ENCODE measurements at regions of chr15 and their contacts with region 1.

Region 1: DNA sequence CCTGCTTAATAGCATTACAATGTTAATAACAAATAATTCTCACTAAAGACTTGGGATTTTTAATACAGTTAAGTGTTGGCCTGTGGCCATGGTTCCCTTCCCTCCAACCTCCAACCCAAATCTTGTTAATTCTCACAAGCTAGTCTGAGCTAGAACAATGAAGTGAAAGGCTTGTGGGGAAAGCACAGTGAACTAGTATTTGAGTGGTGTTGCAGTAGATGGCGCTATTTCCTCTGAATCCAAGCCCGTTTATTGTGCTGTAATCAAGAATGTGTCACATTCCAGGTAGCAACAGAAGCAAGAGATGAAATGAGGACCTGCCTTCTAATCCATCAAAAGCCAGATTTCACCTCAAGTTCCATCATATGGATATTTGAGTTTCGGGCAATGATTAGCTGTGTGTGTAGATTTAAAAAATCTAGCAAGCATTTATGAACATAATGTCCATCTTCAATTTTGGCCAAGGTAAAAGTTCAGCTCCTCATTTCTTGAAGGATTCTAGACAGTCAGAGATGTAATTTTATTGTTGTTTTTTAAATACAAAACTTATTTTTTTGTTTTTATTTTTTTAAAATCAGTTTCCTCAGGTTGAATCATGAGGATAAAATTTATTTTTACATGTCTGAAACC is 160.7 kb downstream of the SQOR start:
- DNase-seq: peak in 1 of 2 experiments; percentile 39
- H3K4me3 ChIP-seq: no peak overlapping the region
- H3K27ac ChIP-seq: no peak overlapping the region
- H3K4me1 ChIP-seq: no peaks in the 10 kb centered on the region
- H3K27me3 ChIP-seq: no peaks in the 10 kb centered on the region
- CTCF ChIP-seq: peak; percentile 72

Region 2: DNA sequence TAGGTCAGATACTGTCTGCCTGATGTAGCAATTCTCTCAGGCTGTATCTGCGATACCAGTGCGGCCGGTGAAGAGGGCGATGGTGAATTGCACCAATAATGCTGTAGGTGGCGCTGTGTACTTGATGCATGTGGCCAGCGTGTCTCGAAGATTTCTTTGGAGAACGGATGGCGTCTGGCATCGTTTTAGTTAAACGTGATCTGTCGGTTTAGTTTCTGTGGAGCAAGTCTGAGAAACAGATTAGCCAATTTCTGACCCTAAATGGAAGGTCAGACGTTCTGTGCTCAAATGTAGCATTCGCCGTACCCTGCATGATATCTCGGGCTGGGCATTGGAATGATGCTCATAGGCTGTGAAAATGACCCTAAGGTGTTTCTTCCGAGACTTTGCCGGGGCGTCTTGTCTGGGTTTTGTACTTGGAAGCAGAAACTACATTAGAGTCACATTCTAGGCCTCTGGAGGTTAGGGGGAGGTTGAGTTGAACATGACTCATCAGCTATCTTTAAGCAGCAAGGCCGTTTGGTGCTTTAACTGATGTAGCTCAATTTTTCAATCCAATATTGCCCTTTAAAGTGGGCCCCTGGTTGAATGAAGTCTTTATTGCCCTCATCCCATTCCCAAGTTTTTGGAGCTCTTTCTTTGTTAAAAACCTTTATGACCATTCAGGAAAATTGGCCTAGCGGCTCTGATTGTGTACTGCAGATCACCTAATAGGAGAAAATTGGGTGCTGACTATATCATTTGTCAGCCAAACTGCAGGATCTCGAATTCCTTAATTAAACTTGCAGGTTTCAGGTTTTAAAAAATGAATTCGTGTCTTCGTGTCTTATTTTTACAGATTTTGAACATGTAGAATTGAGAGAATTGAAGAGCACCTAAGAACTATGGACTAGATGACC is 80.7 kb before region 1 on chr15:
- CTCF ChIA-PET with region 1: no interaction called
- POLR2A ChIA-PET with region 1: no interaction called
- intact Hi-C with region 1: loop called (anchors 5 kb)
- DNase-seq: peak in 1 of 2 experiments; percentile 34
- H3K4me3 ChIP-seq: no peak overlapping the region
- H3K27ac ChIP-seq: no peak overlapping the region
- H3K4me1 ChIP-seq: no peaks in the 10 kb centered on the region
- H3K27me3 ChIP-seq: 0 out of 2 replicates have a peak, but pooled peaks cover 6% of the 10 kb centered on the region
- CTCF ChIP-seq: peak; percentile 81

Region 3: GRCh38 chr15:46091860-46092450 is 296.4 kb after region 1 on chr15:
- CTCF ChIA-PET with region 1: no interaction called
- POLR2A ChIA-PET with region 1: no interaction called
- intact Hi-C with region 1: loop called (anchors 10 kb)
- DNase-seq: peak in 1 of 2 experiments; percentile 1
- H3K4me3 ChIP-seq: no peak overlapping the region
- H3K27ac ChIP-seq: no peak overlapping the region
- H3K4me1 ChIP-seq: no peaks in the 10 kb centered on the region
- H3K27me3 ChIP-seq: no peaks in the 10 kb centered on the region
- CTCF ChIP-seq: peak; percentile 70

Region 4: GRCh38 chr15:46280762-46281542 is 485.4 kb after region 1 on chr15:
- CTCF ChIA-PET with region 1: no interaction called
- POLR2A ChIA-PET with region 1: no interaction called
- intact Hi-C with region 1: loop called (anchors 10 kb)
- DNase-seq: no peak
- H3K4me3 ChIP-seq: no peak overlapping the region
- H3K27ac ChIP-seq: no peak overlapping the region
- H3K4me1 ChIP-seq: no peaks in the 10 kb centered on the region
- H3K27me3 ChIP-seq: no peaks in the 10 kb centered on the region
- CTCF ChIP-seq: 0 out of 2 replicates have a peak, but pooled peaks have one; percentile 16

Measured in PC-9 (cell line).